ENCODE measurements at regions of chr14 and their contacts with region 1.

Region 1: DNA sequence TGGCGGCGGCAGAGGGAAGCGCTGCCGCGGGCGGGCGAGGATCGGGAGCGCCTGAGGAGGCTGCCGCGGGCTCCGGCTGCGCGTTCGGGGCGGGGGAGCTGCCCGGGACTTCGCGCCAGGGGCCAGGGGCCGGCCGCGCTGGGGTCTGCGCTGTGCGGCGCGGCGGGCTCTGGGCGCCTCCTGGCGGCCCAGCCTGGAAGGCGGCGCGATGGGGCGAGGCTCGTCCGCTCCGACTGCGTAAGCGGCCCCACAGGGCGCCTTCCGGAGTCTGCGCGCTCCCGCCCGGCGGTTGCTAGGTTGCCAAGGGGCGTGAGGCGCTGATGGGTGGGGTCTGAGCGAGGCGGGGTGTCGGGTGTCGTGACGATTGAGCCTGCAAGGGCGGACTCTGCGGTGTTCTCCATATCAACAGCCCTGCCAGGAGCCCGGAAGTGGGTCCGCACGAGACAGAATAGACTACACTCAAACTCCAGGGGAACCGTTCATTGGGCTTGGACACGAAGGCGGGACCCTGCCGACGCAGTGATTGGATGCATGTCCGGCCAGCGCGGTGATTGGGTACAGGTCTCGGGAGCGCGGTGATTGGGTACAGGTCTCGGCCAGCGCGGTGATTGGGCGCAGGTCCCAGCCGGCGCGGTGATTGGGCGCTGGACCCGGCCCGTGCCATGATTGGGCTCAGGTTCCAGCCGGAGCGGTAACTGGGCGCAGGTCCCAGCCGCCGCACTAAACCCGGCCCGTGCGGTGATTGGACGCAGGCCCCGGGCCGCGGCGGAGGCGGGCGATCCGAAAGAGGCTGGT is at the start of gene TEDC1:
- DNase-seq: peak; percentile 100
- H3K4me3 ChIP-seq: peak within 1 kb of the TSS; percentile 58 to 89 (median 66)
- H3K4me3 Mint-ChIP-seq: peak within 1 kb of the TSS; percentile 80 to 90
- H3K27ac ChIP-seq: peak within 1 kb of the TSS; percentile 81 to 91
- H3K27ac Mint-ChIP-seq: peak within 1 kb of the TSS; percentile 90 to 97 (median 95)
- H3K4me1 ChIP-seq: peaks cover 44 to 55% of the 10 kb centered on the region in 2 donors
- H3K4me1 Mint-ChIP-seq: peaks cover 31% of the 10 kb centered on the region
- H3K27me3 ChIP-seq: peaks cover 2 to 12% of the 10 kb centered on the region in 2 donors
- H3K27me3 Mint-ChIP-seq: peaks cover 11 to 20% (median 16%) of the 10 kb centered on the region in 3 donors
- CTCF ChIP-seq: peak; percentile 84
- polyA plus RNA-seq, gene TEDC1: 7.8 to 23.4 (median 9.0) TPM

Region 2: DNA sequence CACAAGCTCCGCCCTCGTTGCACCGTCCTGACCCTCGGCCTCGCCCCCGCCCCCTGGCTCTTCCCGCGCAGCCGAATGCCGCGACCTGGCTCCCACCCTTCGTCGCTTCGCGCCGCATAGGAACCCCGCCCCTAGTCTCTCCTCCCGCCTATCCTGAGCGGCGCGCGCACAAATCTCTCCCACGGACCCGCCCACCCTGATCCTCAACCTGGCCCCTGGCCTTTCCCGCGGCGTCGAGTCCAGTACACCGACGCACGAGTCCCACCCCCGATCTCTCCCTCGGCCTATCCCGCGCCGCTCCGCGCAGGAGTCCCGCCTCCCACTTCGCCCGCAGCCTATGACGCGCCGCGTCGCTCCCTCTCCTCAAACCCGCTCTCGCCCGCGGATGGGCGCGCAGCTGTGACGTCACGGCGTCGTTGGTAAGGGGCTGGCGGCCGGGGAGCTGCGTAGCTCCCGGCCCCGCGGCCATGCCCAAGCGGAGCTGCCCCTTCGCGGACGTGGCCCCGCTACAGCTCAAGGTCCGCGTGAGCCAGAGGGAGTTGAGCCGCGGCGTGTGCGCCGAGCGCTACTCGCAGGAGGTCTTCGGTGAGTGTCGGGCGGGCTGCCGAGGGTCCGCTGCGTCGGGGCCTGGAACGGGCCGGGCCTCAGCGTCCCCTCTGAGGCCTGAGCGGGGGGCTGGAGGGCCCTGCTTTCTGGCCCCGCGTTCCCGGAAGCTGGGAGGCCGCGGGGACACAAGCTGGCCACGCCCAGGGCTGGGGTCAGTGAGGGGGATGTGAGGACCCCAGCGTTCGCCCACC is 737.8 kb before region 1 on chr14 and contains the start of gene SIVA1:
- intact Hi-C with region 1: loop called in 1 of 2 experiments (anchors 5 kb)
- DNase-seq: peak; percentile 97 to 100 (median 100)
- H3K4me3 ChIP-seq: peak within 1 kb of the TSS; percentile 64 to 91 (median 88)
- H3K4me3 Mint-ChIP-seq: peak within 1 kb of the TSS; percentile 83 to 90
- H3K27ac ChIP-seq: peak within 1 kb of the TSS; percentile 83 to 95
- H3K27ac Mint-ChIP-seq: peak within 1 kb of the TSS; percentile 85 to 97 (median 93)
- H3K4me1 ChIP-seq: peaks cover 19 to 37% of the 10 kb centered on the region in 2 donors
- H3K4me1 Mint-ChIP-seq: peaks cover 25% of the 10 kb centered on the region
- H3K27me3 ChIP-seq: no peaks in the 10 kb centered on the region
- H3K27me3 Mint-ChIP-seq: no peaks in the 10 kb centered on the region
- CTCF ChIP-seq: no peak
- polyA plus RNA-seq, gene SIVA1: 102 to 193 (median 156) TPM

Region 3: DNA sequence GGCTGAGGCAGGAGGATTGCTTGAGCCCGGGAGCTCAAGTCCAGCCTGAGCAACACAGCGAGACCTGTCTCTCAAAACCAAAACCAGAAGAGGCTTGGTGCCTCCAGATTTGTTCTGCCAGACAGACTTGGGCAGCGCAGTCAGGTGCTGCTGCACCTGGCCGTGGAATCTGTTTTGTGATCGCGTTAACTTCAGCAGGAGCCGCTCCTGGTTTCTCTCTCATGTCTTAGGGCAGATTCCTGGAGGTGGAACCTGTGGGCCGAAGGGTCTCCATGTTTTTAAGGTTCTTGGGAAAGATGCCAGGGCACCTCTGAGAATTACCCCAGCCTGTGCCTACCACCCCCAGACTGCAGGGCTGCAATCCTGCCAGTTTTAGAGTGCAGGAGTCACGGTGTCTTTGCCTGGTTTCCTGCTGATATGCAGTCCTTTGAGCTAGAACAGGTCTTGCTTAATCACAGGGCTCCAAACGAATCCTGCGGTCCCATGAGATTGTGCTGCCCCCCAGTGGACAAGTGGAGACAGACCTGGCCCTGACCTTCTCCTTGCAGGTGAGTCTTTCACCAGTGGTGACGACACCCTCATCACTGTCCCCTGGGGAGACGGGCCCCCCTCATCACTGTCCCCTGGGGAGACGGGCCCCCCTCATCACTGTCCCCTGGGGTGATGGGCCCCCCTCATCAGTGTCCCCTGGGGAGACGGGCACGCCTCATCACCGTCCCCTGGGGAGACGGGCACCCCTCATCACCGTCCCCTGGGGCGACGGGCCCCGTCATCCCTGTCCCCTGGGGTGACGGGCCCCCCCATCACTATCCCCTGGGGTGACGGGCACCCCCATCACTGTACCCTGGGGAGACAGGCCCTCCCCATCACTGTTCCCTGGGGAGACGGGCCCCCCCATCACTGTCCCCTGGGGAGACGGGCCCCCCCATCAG is 138.6 kb before region 1 on chr14:
- intact Hi-C with region 1: no loop called
- DNase-seq: peak; percentile 75 to 81 (median 81)
- H3K4me3 ChIP-seq: no peak overlapping the region
- H3K4me3 Mint-ChIP-seq: no peak overlapping the region
- H3K27ac ChIP-seq: no peak overlapping the region
- H3K27ac Mint-ChIP-seq: peak overlapping the region in 1 of 7 donors; percentile 18
- H3K4me1 ChIP-seq: peaks cover 3 to 4% of the 10 kb centered on the region in 2 donors
- H3K4me1 Mint-ChIP-seq: peaks cover 2% of the 10 kb centered on the region
- H3K27me3 ChIP-seq: no peaks in the 10 kb centered on the region
- H3K27me3 Mint-ChIP-seq: peaks cover 0 to 4% (median 0%) of the 10 kb centered on the region in 3 donors
- CTCF ChIP-seq: peak; percentile 88

Region 4: DNA sequence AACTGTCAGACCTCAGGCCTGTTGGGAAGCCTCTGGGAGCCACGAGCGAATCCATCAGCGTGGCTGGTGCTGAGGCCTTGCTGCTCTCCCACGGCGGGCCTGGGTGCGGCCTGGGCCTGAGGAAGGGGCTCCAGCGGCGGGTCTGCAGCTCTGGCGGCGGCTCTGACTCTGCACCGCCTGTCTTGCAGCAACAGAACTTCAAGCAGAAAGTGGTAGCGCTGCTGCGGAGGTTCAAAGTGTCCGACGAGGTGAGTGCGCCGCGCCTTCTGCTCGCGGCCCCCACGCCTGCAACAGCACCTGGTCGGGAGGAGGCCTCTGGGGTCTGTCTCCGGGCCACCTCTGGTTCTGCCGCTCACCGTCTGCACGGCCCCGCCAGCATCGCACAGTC is 121.1 kb before region 1 on chr14:
- intact Hi-C with region 1: loop called (anchors 1 to 2 kb)
- DNase-seq: no peak
- H3K4me3 ChIP-seq: no peak overlapping the region
- H3K4me3 Mint-ChIP-seq: no peak overlapping the region
- H3K27ac ChIP-seq: no peak overlapping the region
- H3K27ac Mint-ChIP-seq: no peak overlapping the region
- H3K4me1 ChIP-seq: peaks cover 3 to 6% of the 10 kb centered on the region in 2 donors
- H3K4me1 Mint-ChIP-seq: peaks cover 5% of the 10 kb centered on the region
- H3K27me3 ChIP-seq: no peaks in the 10 kb centered on the region
- H3K27me3 Mint-ChIP-seq: peaks cover 1 to 7% (median 4%) of the 10 kb centered on the region in 3 donors
- CTCF ChIP-seq: no peak

Region 5: GRCh38 chr14:105375635-105376057 is 115.1 kb before region 1 on chr14:
- intact Hi-C with region 1: loop called (anchors 1 to 2 kb)
- DNase-seq: peak; percentile 79 to 82 (median 81)
- H3K4me3 ChIP-seq: peak overlapping the region in 1 of 3 experiments; percentile 34
- H3K4me3 Mint-ChIP-seq: peak overlapping the region in 1 of 2 donors; percentile 55
- H3K27ac ChIP-seq: peak overlapping the region; percentile 1 to 72
- H3K27ac Mint-ChIP-seq: peak overlapping the region; percentile 80 to 90 (median 86)
- H3K4me1 ChIP-seq: peaks cover 16 to 25% of the 10 kb centered on the region in 2 donors
- H3K4me1 Mint-ChIP-seq: peaks cover 15% of the 10 kb centered on the region
- H3K27me3 ChIP-seq: no peaks in the 10 kb centered on the region
- H3K27me3 Mint-ChIP-seq: peaks cover 0 to 2% (median 2%) of the 10 kb centered on the region in 3 donors
- CTCF ChIP-seq: no peak

Region 6: DNA sequence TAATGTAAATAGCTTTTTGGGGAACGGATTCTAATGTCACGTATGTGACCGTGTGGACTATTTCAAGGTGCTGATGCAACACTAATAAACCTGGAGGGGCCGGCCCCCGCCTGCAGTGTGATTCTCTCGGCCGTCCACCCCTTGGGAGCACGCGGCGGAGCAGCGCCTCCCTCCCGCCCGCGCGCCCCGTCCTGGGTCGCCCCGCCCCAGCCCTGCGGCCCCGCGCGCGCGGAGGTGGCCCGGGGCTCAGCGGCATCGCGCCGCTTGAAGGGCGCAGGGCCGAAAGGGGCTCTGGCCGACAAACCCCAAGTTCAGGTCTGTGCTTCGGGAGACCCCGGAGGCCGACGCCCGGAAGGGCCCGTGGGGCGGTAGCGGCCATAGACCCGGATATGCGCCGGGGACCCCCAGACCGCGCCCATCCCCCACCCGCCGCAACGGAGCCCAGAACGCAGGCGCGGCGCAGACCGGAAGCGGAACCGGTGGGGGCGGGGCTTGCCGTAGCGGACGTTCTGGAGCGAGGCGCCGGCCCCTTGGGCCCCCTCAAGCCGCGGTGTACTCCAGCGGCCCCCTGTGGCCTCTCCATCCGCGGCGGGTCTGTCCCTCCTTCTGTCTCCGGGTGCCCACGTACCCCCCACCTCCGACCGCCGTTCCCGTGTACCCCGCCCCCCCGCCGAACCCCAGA is 92.6 kb before region 1 on chr14 and contains the start of gene TEX22:
- intact Hi-C with region 1: loop called in 1 of 2 experiments (anchors 5 kb)
- DNase-seq: peak; percentile 67 to 72 (median 71)
- H3K4me3 ChIP-seq: peak within 1 kb of the TSS; percentile 58 to 86 (median 84)
- H3K4me3 Mint-ChIP-seq: peak within 1 kb of the TSS; percentile 81 to 92
- H3K27ac ChIP-seq: peak within 1 kb of the TSS; percentile 59 to 93
- H3K27ac Mint-ChIP-seq: peak within 1 kb of the TSS; percentile 82 to 95 (median 89)
- H3K4me1 ChIP-seq: peaks cover 65 to 76% of the 10 kb centered on the region in 2 donors
- H3K4me1 Mint-ChIP-seq: peaks cover 57% of the 10 kb centered on the region
- H3K27me3 ChIP-seq: no peaks in the 10 kb centered on the region
- H3K27me3 Mint-ChIP-seq: peaks cover 0 to 2% (median 0%) of the 10 kb centered on the region in 3 donors
- CTCF ChIP-seq: peak; percentile 34
- polyA plus RNA-seq, gene TEX22: 0.52 to 2.2 (median 0.57) TPM

Region 7: DNA sequence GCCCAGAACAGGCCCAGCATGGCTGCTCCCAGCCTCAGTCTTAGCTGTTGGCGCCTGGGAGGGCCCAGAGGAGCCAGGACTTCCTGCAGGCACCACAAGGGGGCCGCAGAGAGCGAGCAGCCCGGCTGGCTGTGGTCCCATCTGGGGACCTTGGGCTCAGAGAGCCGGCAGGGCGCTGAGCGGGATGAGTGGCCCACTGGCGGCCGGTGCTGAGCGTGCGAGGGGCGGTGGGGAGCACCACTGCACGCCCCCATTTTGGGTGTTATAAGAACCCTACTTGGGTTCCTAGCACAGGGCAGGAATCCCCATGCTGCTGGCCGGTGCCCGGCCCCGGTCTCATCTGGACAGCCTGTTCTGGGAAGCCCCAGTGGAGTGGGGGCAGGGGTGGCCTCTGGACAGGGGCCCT is 42.1 kb before region 1 on chr14:
- intact Hi-C with region 1: loop called (anchors 2 to 5 kb)
- DNase-seq: peak; percentile 35 to 53 (median 51)
- H3K4me3 ChIP-seq: no peak overlapping the region
- H3K4me3 Mint-ChIP-seq: no peak overlapping the region
- H3K27ac ChIP-seq: no peak overlapping the region
- H3K27ac Mint-ChIP-seq: peak overlapping the region in 1 of 7 donors; percentile 11
- H3K4me1 ChIP-seq: no peaks in the 10 kb centered on the region
- H3K4me1 Mint-ChIP-seq: no peaks in the 10 kb centered on the region
- H3K27me3 ChIP-seq: no peaks in the 10 kb centered on the region
- H3K27me3 Mint-ChIP-seq: no peaks in the 10 kb centered on the region
- CTCF ChIP-seq: peak; percentile 84

Region 8: DNA sequence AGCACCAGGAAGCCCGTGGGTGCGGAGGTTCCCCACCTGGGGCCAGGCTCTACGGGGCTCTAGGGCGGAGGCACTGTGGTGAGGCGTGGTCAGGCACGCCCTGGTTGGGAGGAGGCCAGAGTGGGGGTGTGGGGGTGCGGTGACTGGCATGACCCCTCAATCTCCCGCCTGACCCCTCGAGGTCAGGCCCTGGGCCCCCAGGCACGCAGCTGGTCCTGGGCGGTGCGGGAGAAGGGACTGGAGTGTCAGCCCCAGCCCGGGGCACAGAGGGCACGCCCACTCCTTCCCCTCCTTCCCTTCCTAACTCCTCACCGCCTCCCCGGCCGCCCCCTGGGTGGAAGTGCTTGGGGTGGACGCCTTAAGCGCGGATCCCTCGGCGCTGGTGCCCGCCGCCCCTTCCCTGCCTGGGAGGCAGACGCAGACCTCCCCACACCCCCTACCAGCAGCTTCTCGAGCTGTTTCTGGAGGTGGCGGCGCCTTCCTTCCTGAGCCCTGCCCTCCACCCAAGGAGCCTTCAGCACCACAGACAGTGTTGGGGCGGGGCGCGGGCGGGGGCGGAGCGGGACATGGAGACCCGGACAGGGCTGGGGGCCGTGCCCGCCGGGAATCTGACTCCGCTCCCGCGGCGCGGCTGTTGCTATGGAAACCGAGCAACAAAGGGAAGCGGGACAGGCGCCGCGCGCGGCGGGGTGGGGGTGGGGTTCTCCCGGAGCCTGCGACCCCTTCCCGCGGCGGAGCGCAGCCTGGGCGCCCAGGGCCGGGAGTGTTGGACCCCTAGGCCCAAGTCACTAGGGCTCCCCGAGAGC is 16.9 kb before region 1 on chr14:
- intact Hi-C with region 1: loop called in 1 of 2 experiments (anchors 2 kb)
- DNase-seq: peak in 2 of 3 donors; percentile 51 to 61
- H3K4me3 ChIP-seq: peak overlapping the region; percentile 22 to 73 (median 24)
- H3K4me3 Mint-ChIP-seq: peak overlapping the region; percentile 66 to 81
- H3K27ac ChIP-seq: no peak overlapping the region
- H3K27ac Mint-ChIP-seq: peak overlapping the region in 1 of 7 donors; percentile 8
- H3K4me1 ChIP-seq: peaks cover 17 to 33% of the 10 kb centered on the region in 2 donors
- H3K4me1 Mint-ChIP-seq: peaks cover 15% of the 10 kb centered on the region
- H3K27me3 ChIP-seq: peaks cover 24 to 49% of the 10 kb centered on the region in 2 donors
- H3K27me3 Mint-ChIP-seq: peaks cover 34 to 57% (median 41%) of the 10 kb centered on the region in 3 donors
- CTCF ChIP-seq: no peak

Region 9: GRCh38 chr14:105562713-105563346 is 72.1 kb after region 1 on chr14:
- intact Hi-C with region 1: no loop called
- DNase-seq: no peak
- H3K4me3 ChIP-seq: no peak overlapping the region
- H3K4me3 Mint-ChIP-seq: no peak overlapping the region
- H3K27ac ChIP-seq: no peak overlapping the region
- H3K27ac Mint-ChIP-seq: peak overlapping the region in 1 of 7 donors; percentile 76
- H3K4me1 ChIP-seq: no peaks in the 10 kb centered on the region
- H3K4me1 Mint-ChIP-seq: no peaks in the 10 kb centered on the region
- H3K27me3 ChIP-seq: no peaks in the 10 kb centered on the region
- H3K27me3 Mint-ChIP-seq: peaks cover 0 to 2% (median 1%) of the 10 kb centered on the region in 3 donors
- CTCF ChIP-seq: no peak